Vagina (tissue), 2 donors: ENCODE measurements at regions of chr10 and their contacts with region 1.

Region 1: GRCh38 chr10:73850863-73851461 is 23.4 kb downstream of the CAMK2G start:
- DNase-seq: no peak
- H3K4me3 ChIP-seq: no peak overlapping the region
- H3K27ac ChIP-seq: peak overlapping the region; percentile 84
- H3K4me1 ChIP-seq: peaks cover 41% of the 10 kb centered on the region
- H3K27me3 ChIP-seq: no peaks in the 10 kb centered on the region
- CTCF ChIP-seq: no peak
- POLR2A ChIP-seq: no peak

Region 2: DNA sequence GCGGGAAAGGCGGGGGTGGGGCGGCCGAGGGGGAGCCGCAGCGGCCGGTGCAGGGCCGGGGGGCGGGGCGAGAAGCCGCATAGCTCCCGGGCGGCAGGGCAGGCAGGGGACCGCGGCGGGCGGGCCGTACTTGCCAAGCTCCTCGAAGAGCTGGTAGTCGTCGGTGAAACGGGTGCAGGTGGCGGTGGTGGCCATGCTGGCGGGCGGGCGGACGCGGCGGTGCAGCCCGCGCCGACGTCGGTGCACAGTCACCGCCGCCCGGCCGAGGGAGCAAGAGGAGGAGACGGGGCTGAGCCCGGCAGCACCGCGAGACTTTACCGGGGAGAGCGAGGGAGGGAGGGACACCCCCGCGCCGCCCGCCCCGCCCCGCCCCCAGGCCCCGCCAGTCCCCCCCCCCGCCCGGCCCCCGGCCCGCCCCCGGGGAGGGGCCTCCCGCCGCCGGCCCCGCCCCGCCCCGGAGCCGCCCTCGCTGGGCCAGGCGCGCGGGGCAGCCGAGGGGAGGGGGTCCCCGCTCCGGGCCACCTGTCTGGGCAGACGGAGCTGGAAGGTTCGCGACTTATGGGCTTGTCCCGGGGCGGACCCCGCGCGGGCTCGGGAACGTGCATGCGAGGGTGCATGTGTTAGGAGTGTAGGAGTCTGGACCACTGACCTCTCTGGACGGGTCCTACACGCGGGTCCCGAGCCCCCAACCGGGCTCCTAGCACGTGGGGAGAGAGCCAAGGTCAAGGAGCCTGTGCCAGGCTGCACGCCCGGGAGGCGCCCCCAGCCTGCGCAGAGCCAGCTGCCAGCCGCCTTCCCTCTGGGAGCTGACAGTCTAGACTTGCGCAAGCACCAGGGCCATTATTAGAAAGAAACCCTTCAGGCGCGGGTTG is 23.5 kb after region 1 on chr10 and contains the start of gene CAMK2G:
- intact Hi-C with region 1: loop called (anchors 2 kb)
- DNase-seq: no peak
- H3K4me3 ChIP-seq: peak within 1 kb of the TSS; percentile 88
- H3K27ac ChIP-seq: peak within 1 kb of the TSS; percentile 90
- H3K4me1 ChIP-seq: peaks cover 48% of the 10 kb centered on the region
- H3K27me3 ChIP-seq: no peaks in the 10 kb centered on the region
- CTCF ChIP-seq: peak in 1 of 3 experiments; percentile 4
- POLR2A ChIP-seq: peak in 1 of 2 donors; percentile 9
- total RNA-seq, gene CAMK2G: 48.9 TPM

Region 3: DNA sequence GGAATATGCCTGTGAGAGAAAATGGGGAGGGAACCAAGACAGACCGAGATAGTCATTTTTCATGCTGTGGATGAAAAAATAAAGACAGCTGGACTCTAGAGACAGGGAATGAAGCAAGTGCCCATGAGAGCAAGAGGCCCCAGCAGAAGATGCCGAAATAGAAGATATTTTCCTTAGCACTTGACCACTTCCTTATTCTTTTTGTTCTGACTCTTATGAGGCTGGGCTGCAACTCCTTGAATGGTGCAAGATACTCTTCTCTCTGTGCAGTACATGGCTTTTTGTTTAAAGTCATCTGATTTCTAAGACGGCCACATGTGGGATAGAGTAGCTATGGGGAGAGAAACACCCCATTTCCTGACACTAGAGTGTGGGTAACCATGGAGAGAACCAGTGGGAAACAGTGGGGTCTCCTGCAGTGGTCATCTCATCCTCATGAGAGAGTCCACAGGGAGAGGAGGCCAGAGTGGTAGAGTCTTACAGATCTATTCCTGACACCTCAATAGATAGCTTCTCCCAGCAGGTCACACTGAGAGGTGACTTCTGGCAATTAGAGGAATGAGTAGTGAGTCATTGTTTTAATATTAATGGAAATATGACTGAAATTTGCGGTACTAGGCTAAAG is 129.0 kb after region 1 on chr10:
- intact Hi-C with region 1: no loop called
- DNase-seq: peak in 1 of 2 donors; percentile 74
- H3K4me3 ChIP-seq: no peak overlapping the region
- H3K27ac ChIP-seq: no peak overlapping the region
- H3K4me1 ChIP-seq: no peaks in the 10 kb centered on the region
- H3K27me3 ChIP-seq: no peaks in the 10 kb centered on the region
- CTCF ChIP-seq: no peak
- POLR2A ChIP-seq: no peak